PC-3 (cell line): ENCODE measurements at regions of chr22 and their contacts with region 1.

Region 1: GRCh38 chr22:31345331-31346254 is 553 bp downstream of the PATZ1 start:
- DNase-seq: peak; percentile 82
- ATAC-seq: peak; percentile 19
- H3K4me3 ChIP-seq: peak overlapping the region; percentile 82
- H3K27ac ChIP-seq: peak overlapping the region; percentile 36; the same call in 1 of the 2 replicates
- H3K4me1 ChIP-seq: peaks cover 31% of the 10 kb centered on the region
- H3K27me3 ChIP-seq: no peaks in the 10 kb centered on the region
- CTCF ChIP-seq: peak; percentile 59

Region 2: GRCh38 chr22:31399211-31400028 is 53.8 kb after region 1 on chr22 and contains the start of gene DRG1:
- CTCF ChIA-PET with region 1: no interaction called
- POLR2A ChIA-PET with region 1: no interaction called
- intact Hi-C with region 1: loop called (anchors 1 kb)
- DNase-seq: peak; percentile 93
- ATAC-seq: peak; percentile 99
- H3K4me3 ChIP-seq: peak within 1 kb of the TSS; percentile 83
- H3K27ac ChIP-seq: peak within 1 kb of the TSS; percentile 39
- H3K4me1 ChIP-seq: peaks cover 5% of the 10 kb centered on the region; the same call in 1 of the 2 replicates
- H3K27me3 ChIP-seq: no peaks in the 10 kb centered on the region
- CTCF ChIP-seq: no peak
- total RNA-seq, gene DRG1: 32.1 and 49.9 TPM in 2 replicates

Region 3: GRCh38 chr22:31489604-31490495 is 144.3 kb after region 1 on chr22 and contains the start of gene EIF4ENIF1:
- CTCF ChIA-PET with region 1: no interaction called
- POLR2A ChIA-PET with region 1: no interaction called
- intact Hi-C with region 1: loop called (anchors 5 kb)
- DNase-seq: peak; percentile 69
- ATAC-seq: peak; percentile 73
- H3K4me3 ChIP-seq: peak within 1 kb of the TSS; percentile 99
- H3K27ac ChIP-seq: peak within 1 kb of the TSS; percentile 67
- H3K4me1 ChIP-seq: peaks cover 14% of the 10 kb centered on the region; the same call in 1 of the 2 replicates
- H3K27me3 ChIP-seq: no peaks in the 10 kb centered on the region
- CTCF ChIP-seq: no peak
- total RNA-seq, gene EIF4ENIF1: 4.5 and 5.3 TPM in 2 replicates